Mammary epithelial cell (primary cell): ENCODE measurements at regions of chr19 and their contacts with region 1.

Region 1: DNA sequence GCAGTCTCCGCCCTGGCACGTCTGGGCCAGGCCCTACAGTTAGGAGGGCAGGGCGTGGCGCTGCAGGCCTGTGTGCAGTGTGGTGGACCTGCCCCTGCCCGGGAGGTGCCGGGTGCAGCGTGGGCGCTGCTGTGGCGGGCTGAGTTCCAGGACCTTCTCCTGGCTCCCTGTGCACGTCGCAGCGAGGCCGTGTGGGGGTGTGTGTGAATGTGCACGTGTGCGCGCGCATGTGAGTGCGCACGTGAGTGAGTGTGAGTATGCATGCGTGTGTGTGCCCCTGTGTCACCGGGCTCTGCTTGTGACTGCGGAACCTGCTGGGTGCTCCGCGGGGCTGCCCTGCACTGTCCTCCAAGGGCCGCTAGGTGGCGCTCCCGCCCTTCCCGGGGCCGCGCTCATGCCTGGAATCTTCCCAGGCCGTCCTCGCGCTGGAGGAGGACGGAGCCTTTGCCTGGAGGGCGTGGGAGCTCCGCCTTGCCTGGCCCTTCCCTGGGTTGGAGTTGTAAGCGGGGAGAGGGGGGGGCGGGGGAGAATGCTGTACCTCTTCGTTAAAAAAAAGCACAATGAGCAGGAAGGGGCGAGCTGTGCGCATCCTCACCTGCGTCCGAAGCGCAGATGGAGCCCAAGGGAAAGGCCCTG is 79.3 kb downstream of the KDM4B start:
- DNase-seq: peak; percentile 78
- H3K4me3 ChIP-seq: peak overlapping the region in 1 of 3 experiments; percentile 4
- H3K27ac ChIP-seq: no peak overlapping the region
- H3K4me1 ChIP-seq: peaks cover 19% of the 10 kb centered on the region
- H3K27me3 ChIP-seq: no peaks in the 10 kb centered on the region
- CTCF ChIP-seq: peak; percentile 94 to 98

Region 2: DNA sequence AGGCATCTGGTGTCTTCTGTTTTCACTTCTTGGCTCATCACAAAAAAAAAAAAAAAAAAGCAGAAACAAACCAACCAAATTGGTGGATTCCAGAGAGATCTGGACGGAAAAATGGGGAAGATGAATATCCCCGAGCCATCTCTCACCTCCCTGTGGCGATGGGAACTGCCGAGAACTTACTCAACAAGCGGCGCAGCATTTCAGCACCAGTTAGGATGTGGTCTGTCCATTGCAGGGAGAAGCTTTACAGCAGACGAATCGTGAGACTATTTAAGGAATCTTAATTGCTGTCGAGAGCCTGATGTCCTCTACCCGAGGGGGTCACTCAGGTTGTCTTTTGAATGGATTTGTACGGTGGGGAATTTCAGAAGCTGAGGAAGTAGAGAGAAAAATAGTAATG is 96.6 kb before region 1 on chr19:
- CTCF ChIA-PET with region 1: no interaction called
- dilution Hi-C with region 1: loop called (anchors 5 kb)
- in situ Hi-C with region 1: no loop called
- intact Hi-C with region 1: no loop called
- DNase-seq: no peak
- H3K4me3 ChIP-seq: no peak overlapping the region
- H3K27ac ChIP-seq: no peak overlapping the region
- H3K4me1 ChIP-seq: no peaks in the 10 kb centered on the region
- H3K27me3 ChIP-seq: no peaks in the 10 kb centered on the region
- CTCF ChIP-seq: no peak

Region 3: GRCh38 chr19:4976401-4977298 is 71.6 kb before region 1 on chr19:
- CTCF ChIA-PET with region 1: no interaction called
- dilution Hi-C with region 1: no loop called
- in situ Hi-C with region 1: no loop called
- intact Hi-C with region 1: no loop called
- DNase-seq: peak; percentile 90
- H3K4me3 ChIP-seq: no peak overlapping the region
- H3K27ac ChIP-seq: peak overlapping the region; percentile 67
- H3K4me1 ChIP-seq: peaks cover 43% of the 10 kb centered on the region
- H3K27me3 ChIP-seq: no peaks in the 10 kb centered on the region
- CTCF ChIP-seq: peak; percentile 54 to 75

Region 4: GRCh38 chr19:5124111-5124855 is 76.1 kb after region 1 on chr19:
- CTCF ChIA-PET with region 1: no interaction called
- dilution Hi-C with region 1: no loop called
- in situ Hi-C with region 1: no loop called
- intact Hi-C with region 1: no loop called
- DNase-seq: no peak
- H3K4me3 ChIP-seq: no peak overlapping the region
- H3K27ac ChIP-seq: no peak overlapping the region
- H3K4me1 ChIP-seq: no peaks in the 10 kb centered on the region
- H3K27me3 ChIP-seq: no peaks in the 10 kb centered on the region
- CTCF ChIP-seq: no peak

Region 5: GRCh38 chr19:5308471-5309437 is 260.5 kb after region 1 on chr19:
- CTCF ChIA-PET with region 1: no interaction called
- dilution Hi-C with region 1: loop called (anchors 10 kb)
- in situ Hi-C with region 1: no loop called
- intact Hi-C with region 1: no loop called
- DNase-seq: peak; percentile 87
- H3K4me3 ChIP-seq: peak overlapping the region in 1 of 3 experiments; percentile 37
- H3K27ac ChIP-seq: peak overlapping the region; percentile 84
- H3K4me1 ChIP-seq: peaks cover 15% of the 10 kb centered on the region
- H3K27me3 ChIP-seq: no peaks in the 10 kb centered on the region
- CTCF ChIP-seq: no peak

Region 6: DNA sequence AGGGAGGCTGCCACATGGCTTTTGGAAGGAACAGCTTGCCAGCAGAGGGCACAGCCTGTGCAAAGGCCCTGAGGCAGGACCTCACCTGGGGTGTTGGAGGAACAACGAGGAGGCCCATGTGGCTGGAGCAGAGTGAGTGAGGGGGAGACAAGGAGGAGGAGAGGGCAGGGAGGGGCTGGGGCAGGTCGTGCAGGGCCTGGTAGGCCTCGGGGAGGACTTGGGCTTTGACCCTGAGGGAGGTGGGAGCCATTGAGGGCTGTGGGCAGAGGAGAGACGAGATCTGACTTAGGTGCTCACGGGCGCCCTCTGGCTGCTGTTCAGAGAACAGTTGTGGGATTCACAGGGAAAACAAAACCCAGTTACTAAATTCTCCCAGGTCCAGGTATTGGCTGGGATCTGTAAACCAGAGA is 432.2 kb after region 1 on chr19:
- CTCF ChIA-PET with region 1: no interaction called
- dilution Hi-C with region 1: loop called (anchors 10 kb)
- in situ Hi-C with region 1: no loop called
- intact Hi-C with region 1: loop called (anchors 5 kb)
- DNase-seq: no peak
- H3K4me3 ChIP-seq: no peak overlapping the region
- H3K27ac ChIP-seq: no peak overlapping the region
- H3K4me1 ChIP-seq: no peaks in the 10 kb centered on the region
- H3K27me3 ChIP-seq: peaks cover 13% of the 10 kb centered on the region
- CTCF ChIP-seq: peak; percentile 43 to 54

Region 7: DNA sequence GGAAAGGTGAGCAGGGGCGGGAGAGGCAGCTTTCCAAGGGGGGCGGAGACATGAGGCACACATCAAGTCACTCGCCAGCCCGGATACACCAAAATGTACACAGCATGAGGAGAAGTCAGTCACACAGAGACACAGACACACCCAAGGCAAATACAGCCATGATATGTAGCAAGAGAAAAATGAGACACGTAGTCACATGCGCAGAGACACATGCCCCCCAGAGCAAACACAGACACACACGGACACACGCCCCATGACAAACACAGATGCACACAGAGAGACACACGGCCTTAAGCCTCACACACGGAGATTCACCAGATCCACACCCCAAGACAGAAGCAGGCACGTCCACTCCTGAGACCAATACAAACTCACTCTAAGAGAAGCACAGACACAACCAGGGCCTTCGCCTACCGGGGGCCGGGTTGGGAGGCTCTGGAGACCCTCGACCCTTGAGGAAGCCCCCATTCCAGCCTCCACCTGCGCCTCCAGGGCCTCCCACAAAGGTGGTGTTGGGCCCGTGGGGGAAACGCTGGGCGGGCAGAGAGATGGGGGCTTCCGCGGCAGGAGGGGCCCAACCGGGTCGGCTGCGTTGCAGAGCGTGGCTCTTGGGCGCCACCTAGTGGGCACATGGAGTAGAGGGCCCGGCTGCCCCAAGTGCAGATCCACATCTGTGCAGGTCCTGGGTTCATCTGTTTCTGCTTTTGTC is 529.7 kb after region 1 on chr19:
- CTCF ChIA-PET with region 1: no interaction called
- dilution Hi-C with region 1: no loop called
- in situ Hi-C with region 1: loop called in 1 of 2 experiments (anchors 25 kb)
- intact Hi-C with region 1: loop called (anchors 1 kb)
- DNase-seq: peak; percentile 67
- H3K4me3 ChIP-seq: peak overlapping the region in 1 of 3 experiments; percentile 42
- H3K27ac ChIP-seq: no peak overlapping the region
- H3K4me1 ChIP-seq: peaks cover 8% of the 10 kb centered on the region
- H3K27me3 ChIP-seq: no peaks in the 10 kb centered on the region
- CTCF ChIP-seq: peak; percentile 85 to 99